ENCODE measurements at regions of chr18 and their contacts with region 1.

Region 1: DNA sequence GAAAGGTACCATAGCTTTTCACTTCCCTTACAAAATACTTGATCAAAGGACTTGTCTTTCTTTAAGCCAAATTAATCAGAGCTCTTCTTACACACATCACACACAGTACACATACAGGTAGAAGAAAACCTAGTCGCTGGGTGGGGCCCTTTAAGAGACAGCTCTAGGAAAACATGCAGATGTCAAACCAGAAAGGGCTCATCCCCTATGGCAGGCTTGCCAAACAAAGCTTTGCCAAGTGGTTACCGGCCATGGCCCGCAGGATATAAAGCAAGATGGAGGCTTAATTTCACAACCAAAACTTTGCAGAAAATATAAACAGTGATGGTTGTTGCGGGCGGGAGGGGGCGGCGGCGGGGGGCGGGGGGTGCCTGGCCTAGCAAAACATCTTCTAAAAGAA is 2156.0 kb upstream of the PIK3C3 start:
- DNase-seq: peak; percentile 28
- H3K4me3 Mint-ChIP-seq: peak overlapping the region; percentile 96
- H3K27ac Mint-ChIP-seq: peak overlapping the region; percentile 86
- H3K4me1 Mint-ChIP-seq: peaks cover 26% of the 10 kb centered on the region
- H3K27me3 Mint-ChIP-seq: no peaks in the 10 kb centered on the region
- CTCF ChIP-seq: no peak

Region 2: GRCh38 chr18:39596891-39597290 is 202.1 kb before region 1 on chr18:
- CTCF ChIA-PET with region 1: no interaction called
- intact Hi-C with region 1: loop called (anchors 5 kb)
- DNase-seq: no peak
- H3K4me3 Mint-ChIP-seq: no peak overlapping the region
- H3K27ac Mint-ChIP-seq: no peak overlapping the region
- H3K4me1 Mint-ChIP-seq: peaks cover 48% of the 10 kb centered on the region
- H3K27me3 Mint-ChIP-seq: no peaks in the 10 kb centered on the region
- CTCF ChIP-seq: no peak

Region 3: DNA sequence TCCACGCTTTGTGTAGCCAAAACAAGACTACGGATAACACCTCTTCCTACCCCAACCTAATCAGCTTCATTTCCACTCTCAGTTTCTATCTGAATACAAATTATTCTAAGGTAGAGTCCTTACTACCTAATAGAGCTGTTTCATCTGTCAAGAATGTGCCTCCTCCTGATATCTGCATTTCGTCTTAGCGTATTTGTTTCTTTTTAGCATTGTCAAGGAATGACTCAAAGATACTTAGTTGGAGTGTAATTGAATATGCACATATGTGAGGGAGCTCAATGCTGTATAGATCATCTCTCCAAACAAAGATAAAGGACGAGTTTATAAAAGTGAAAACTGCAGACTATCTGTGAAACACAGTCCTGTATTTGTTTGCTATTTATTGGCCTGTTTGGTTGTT is 174.1 kb before region 1 on chr18:
- CTCF ChIA-PET with region 1: no interaction called
- intact Hi-C with region 1: loop called (anchors 10 kb)
- DNase-seq: no peak
- H3K4me3 Mint-ChIP-seq: peak overlapping the region; percentile 12
- H3K27ac Mint-ChIP-seq: peak overlapping the region; percentile 75
- H3K4me1 Mint-ChIP-seq: peaks cover 68% of the 10 kb centered on the region
- H3K27me3 Mint-ChIP-seq: no peaks in the 10 kb centered on the region
- CTCF ChIP-seq: no peak

Region 4: GRCh38 chr18:39854291-39854690 is 55.3 kb after region 1 on chr18:
- CTCF ChIA-PET with region 1: no interaction called
- intact Hi-C with region 1: no loop called
- DNase-seq: no peak
- H3K4me3 Mint-ChIP-seq: no peak overlapping the region
- H3K27ac Mint-ChIP-seq: no peak overlapping the region
- H3K4me1 Mint-ChIP-seq: no peaks in the 10 kb centered on the region
- H3K27me3 Mint-ChIP-seq: no peaks in the 10 kb centered on the region
- CTCF ChIP-seq: no peak

Region 5: DNA sequence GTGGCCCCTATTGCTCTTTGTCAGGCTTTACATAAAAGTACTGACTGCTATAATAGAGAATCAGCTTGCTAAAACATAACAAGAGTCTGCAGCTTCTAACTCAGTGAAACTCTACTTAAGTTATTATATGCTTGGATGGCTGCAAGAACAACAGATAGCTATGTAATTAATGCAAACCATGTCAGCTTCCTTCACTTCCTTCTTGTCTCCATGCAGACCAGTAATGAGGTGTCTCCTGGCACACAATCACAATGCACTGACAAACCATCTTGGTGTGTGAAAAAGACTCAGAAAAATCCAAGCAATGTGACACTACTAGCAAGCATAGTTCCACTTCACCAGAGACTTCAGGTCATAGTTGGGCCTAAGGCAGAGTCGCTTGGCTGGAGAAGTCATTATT is 87.1 kb after region 1 on chr18:
- CTCF ChIA-PET with region 1: no interaction called
- intact Hi-C with region 1: no loop called
- DNase-seq: no peak
- H3K4me3 Mint-ChIP-seq: no peak overlapping the region
- H3K27ac Mint-ChIP-seq: no peak overlapping the region
- H3K4me1 Mint-ChIP-seq: no peaks in the 10 kb centered on the region
- H3K27me3 Mint-ChIP-seq: no peaks in the 10 kb centered on the region
- CTCF ChIP-seq: no peak